ENCODE measurements at regions of chr20 and their contacts with region 1.

Region 1: GRCh38 chr20:50335105-50335504 is 144.5 kb downstream of the CEBPB start:
- DNase-seq: peak; percentile 79
- H3K4me3 Mint-ChIP-seq: no peak overlapping the region
- H3K27ac Mint-ChIP-seq: peak overlapping the region; percentile 91
- H3K4me1 Mint-ChIP-seq: peaks cover 49% of the 10 kb centered on the region
- H3K27me3 Mint-ChIP-seq: no peaks in the 10 kb centered on the region
- CTCF ChIP-seq: no peak

Region 2: DNA sequence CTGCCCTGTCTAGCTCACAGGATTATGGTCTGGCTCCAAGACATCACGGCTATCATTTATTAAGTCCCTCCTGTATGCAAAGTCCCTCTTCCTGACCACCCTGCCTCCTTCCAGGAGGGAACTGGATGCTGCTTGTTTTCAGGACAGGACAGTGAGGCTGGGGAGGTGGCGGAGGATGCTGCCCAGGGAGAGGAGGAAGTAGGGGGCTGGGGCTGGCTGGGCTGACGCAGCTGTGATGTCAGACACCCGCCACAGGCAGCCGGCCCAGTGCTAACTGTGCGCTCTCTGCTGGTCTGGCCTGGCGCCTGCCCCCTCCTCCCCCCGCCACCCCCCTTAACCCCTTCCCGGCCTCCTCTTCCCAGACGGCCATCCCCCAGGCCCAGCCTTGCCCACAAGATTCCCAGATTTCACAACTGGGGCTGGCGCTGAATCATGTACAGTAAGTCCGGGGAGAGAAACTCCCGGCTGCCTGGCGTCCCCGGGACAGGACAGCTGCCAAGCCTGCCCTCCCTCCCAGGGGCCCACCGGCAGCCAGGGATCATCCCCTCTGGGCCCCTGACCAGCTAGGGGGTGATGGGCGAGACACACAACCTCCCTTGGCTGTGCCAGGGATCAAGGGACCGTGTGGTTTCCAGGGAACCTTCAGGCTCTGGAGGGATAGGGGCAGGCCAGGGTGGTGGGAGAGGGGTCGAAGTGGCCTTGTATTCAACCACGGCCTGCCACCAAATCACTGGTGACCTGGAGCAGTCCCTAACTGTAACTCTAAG is 26.4 kb before region 1 on chr20:
- CTCF ChIA-PET with region 1: interaction called, 4 read pairs
- POLR2A ChIA-PET with region 1: interaction called, 41 read pairs
- intact Hi-C with region 1: no loop called
- DNase-seq: peak; percentile 99
- H3K4me3 Mint-ChIP-seq: no peak overlapping the region
- H3K27ac Mint-ChIP-seq: peak overlapping the region; percentile 49
- H3K4me1 Mint-ChIP-seq: peaks cover 66% of the 10 kb centered on the region
- H3K27me3 Mint-ChIP-seq: no peaks in the 10 kb centered on the region
- CTCF ChIP-seq: peak; percentile 6

Region 3: DNA sequence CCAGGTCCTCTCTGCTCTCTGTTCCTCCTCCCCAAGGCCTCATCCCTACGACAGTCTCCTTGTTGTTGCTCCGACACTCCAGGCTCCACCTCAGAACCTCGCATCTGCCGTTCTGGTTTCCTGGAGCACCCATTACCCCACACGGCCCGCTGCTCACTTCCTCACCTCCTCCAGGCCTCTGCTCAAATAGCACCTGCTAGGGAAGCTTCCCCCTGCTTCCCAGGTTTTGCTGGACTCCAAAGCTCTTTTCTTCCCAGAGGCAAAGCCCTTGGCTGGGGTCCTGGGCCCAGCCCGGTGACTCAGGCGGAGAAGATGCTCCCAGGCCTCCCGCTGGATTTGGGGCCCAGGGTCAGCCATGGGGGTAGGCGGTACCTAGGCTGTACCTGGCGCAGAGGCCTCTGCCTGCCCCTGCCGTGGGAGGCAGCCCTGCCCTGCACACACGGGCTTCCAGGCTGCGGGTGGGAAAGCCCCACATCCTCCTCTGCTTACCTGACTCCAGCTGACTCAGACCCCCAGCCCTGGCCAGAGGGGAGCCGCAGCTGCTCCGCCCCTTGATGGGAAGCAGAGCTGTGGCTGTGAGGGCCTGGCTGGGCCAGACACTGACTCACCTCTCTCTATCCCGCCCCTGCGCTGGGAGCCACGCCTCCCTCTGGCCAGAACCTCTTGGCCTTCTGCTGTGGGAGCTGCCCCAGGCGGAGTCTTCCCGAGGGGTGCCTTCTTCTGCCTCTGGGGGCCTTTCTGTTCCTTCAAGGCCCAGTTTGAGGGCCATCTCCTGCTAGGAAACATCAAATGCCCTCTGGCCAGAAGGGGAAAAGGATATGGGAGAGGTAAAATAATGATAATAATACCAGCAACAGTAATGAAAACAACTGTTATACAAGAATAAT is 14.0 kb before region 1 on chr20:
- CTCF ChIA-PET with region 1: interaction called, 17 read pairs
- POLR2A ChIA-PET with region 1: interaction called, 96 read pairs
- intact Hi-C with region 1: no loop called
- DNase-seq: peak; percentile 97
- H3K4me3 Mint-ChIP-seq: peak overlapping the region; percentile 85
- H3K27ac Mint-ChIP-seq: peak overlapping the region; percentile 92
- H3K4me1 Mint-ChIP-seq: peaks cover 32% of the 10 kb centered on the region
- H3K27me3 Mint-ChIP-seq: no peaks in the 10 kb centered on the region
- CTCF ChIP-seq: no peak

Region 4: GRCh38 chr20:50346372-50347283 is 11.5 kb after region 1 on chr20:
- CTCF ChIA-PET with region 1: interaction called, 3 read pairs
- POLR2A ChIA-PET with region 1: interaction called, 23 read pairs
- intact Hi-C with region 1: no loop called
- DNase-seq: peak; percentile 94
- H3K4me3 Mint-ChIP-seq: no peak overlapping the region
- H3K27ac Mint-ChIP-seq: peak overlapping the region; percentile 88
- H3K4me1 Mint-ChIP-seq: peaks cover 10% of the 10 kb centered on the region
- H3K27me3 Mint-ChIP-seq: no peaks in the 10 kb centered on the region
- CTCF ChIP-seq: no peak

Region 5: DNA sequence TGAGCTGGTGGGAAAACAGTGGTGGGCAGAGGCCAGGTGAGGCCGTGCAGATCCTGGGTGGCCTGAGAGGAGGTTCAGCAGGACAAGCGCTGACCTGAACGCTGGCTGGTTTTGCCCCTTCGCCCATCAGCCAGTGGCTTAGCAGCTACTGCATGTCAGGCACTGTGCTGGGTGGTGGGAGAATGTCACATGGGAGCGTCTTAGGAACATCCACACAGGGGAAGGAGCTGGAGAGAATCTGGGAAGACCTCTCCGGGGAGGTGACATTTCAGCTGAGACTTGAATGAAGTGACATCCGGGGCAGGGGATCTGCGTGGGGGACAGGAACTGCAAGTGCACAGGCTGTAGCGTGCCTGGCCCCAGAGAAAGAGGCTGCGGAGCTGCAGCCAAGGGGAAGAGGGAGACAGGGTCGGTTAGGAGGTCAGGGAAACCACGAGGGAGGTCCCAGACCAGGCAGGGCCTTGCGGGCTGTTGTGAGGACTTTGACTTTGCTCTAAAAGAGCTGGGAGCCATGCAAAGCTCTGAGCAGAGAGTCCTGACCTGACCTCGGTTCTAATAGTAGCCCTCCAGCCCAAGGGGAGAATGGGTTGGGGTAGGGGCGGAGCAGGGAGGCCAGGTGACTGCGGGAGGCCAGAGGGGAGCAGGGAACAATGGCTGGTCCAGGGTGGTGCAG is 18.3 kb after region 1 on chr20:
- CTCF ChIA-PET with region 1: interaction called, 4 read pairs
- POLR2A ChIA-PET with region 1: interaction called, 14 read pairs
- intact Hi-C with region 1: no loop called
- DNase-seq: no peak
- H3K4me3 Mint-ChIP-seq: no peak overlapping the region
- H3K27ac Mint-ChIP-seq: peak overlapping the region; percentile 1
- H3K4me1 Mint-ChIP-seq: peaks cover 14% of the 10 kb centered on the region
- H3K27me3 Mint-ChIP-seq: no peaks in the 10 kb centered on the region
- CTCF ChIP-seq: no peak

Region 6: GRCh38 chr20:50379049-50379990 is 44.2 kb after region 1 on chr20:
- CTCF ChIA-PET with region 1: interaction called, 6 read pairs
- POLR2A ChIA-PET with region 1: interaction called, 5 read pairs
- intact Hi-C with region 1: loop called (anchors 5 kb)
- DNase-seq: peak; percentile 91
- H3K4me3 Mint-ChIP-seq: no peak overlapping the region
- H3K27ac Mint-ChIP-seq: no peak overlapping the region
- H3K4me1 Mint-ChIP-seq: peaks cover 42% of the 10 kb centered on the region
- H3K27me3 Mint-ChIP-seq: no peaks in the 10 kb centered on the region
- CTCF ChIP-seq: no peak

Region 7: GRCh38 chr20:50450881-50451752 is 116.0 kb after region 1 on chr20:
- CTCF ChIA-PET with region 1: no interaction called
- POLR2A ChIA-PET with region 1: interaction called, 10 read pairs
- intact Hi-C with region 1: no loop called
- DNase-seq: peak; percentile 82
- H3K4me3 Mint-ChIP-seq: peak overlapping the region; percentile 53
- H3K27ac Mint-ChIP-seq: peak overlapping the region; percentile 66
- H3K4me1 Mint-ChIP-seq: peaks cover 28% of the 10 kb centered on the region
- H3K27me3 Mint-ChIP-seq: no peaks in the 10 kb centered on the region
- CTCF ChIP-seq: no peak

Region 8: DNA sequence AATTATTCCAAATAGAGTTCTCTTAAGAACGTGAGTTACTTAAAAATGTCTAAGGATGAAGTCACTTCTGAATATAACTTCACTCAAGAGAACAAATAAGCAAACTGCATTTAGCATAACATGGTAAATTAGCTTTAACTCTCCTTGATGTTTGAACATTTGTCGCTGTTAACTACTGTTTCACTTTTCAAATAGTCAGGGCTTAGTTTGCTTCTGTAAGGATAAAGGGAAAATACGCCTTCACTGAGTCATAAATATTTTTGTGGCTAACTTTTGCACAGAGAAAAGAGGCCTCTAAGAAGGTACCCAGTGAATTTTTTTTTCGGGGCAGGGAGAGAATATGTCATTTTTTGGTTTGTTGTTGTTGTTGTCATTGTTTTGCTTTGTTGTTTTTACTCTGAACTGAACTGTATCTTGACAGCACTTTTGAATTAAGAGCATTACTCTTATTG is 183.2 kb after region 1 on chr20:
- CTCF ChIA-PET with region 1: no interaction called
- POLR2A ChIA-PET with region 1: no interaction called
- intact Hi-C with region 1: no loop called
- DNase-seq: no peak
- H3K4me3 Mint-ChIP-seq: peak overlapping the region; percentile 54
- H3K27ac Mint-ChIP-seq: peak overlapping the region; percentile 82
- H3K4me1 Mint-ChIP-seq: peaks cover 50% of the 10 kb centered on the region
- H3K27me3 Mint-ChIP-seq: no peaks in the 10 kb centered on the region
- CTCF ChIP-seq: no peak

Measured in MCF 10A (cell line).